ENCODE measurements at regions of chr2 and their contacts with region 1.

Region 1: DNA sequence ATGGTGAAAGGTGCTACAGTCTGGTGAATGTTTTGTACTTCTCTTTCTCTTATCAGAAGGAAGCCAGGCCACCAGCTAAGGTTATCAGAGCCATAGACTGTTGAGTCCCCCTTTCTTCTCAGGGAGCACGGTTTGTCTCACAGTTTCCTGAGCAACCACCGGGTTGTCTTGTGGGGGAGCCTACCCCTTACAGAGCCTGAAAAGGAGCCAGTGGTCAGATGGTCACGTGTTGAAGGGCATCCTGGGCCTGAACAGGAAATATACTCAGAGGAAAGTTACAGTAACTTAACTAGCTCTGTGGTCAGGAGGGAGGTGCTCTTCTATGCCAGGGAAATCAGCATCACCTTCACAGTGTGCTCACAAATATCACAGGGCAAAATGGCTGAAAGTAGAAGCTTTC is 11.6 kb downstream of the CD28 start:
- DNase-seq: peak; percentile 69
- ATAC-seq: peak; percentile 84
- H3K4me3 Mint-ChIP-seq: peak overlapping the region; percentile 56
- H3K27ac Mint-ChIP-seq: peak overlapping the region; percentile 83
- H3K4me1 Mint-ChIP-seq: peaks cover 82% of the 10 kb centered on the region
- H3K27me3 Mint-ChIP-seq: no peaks in the 10 kb centered on the region

Region 2: DNA sequence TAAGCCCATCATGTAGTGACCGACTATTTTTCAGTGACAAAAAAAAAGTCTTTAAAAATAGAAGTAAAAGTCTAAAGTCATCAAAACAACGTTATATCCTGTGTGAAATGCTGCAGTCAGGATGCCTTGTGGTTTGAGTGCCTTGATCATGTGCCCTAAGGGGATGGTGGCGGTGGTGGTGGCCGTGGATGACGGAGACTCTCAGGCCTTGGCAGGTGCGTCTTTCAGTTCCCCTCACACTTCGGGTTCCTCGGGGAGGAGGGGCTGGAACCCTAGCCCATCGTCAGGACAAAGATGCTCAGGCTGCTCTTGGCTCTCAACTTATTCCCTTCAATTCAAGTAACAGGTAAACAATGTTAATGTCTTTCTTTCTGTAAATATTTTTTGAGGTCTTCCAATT is 11.7 kb before region 1 on chr2 and contains the start of gene CD28:
- POLR2A ChIA-PET with region 1: interaction called, 75 read pairs
- DNase-seq: peak; percentile 82
- ATAC-seq: peak; percentile 84
- H3K4me3 Mint-ChIP-seq: peak within 1 kb of the TSS; percentile 89
- H3K27ac Mint-ChIP-seq: peak within 1 kb of the TSS; percentile 98
- H3K4me1 Mint-ChIP-seq: peaks cover 57% of the 10 kb centered on the region
- H3K27me3 Mint-ChIP-seq: no peaks in the 10 kb centered on the region
- total RNA-seq, gene CD28: 52.7 to 58.9 TPM

Region 3: GRCh38 chr2:203730076-203730729 is 12.1 kb after region 1 on chr2:
- POLR2A ChIA-PET with region 1: interaction called, 10 read pairs
- DNase-seq: no peak
- ATAC-seq: peak; percentile 55
- H3K4me3 Mint-ChIP-seq: peak overlapping the region; percentile 31
- H3K27ac Mint-ChIP-seq: peak overlapping the region; percentile 59
- H3K4me1 Mint-ChIP-seq: peaks cover 56% of the 10 kb centered on the region
- H3K27me3 Mint-ChIP-seq: no peaks in the 10 kb centered on the region

Region 4: DNA sequence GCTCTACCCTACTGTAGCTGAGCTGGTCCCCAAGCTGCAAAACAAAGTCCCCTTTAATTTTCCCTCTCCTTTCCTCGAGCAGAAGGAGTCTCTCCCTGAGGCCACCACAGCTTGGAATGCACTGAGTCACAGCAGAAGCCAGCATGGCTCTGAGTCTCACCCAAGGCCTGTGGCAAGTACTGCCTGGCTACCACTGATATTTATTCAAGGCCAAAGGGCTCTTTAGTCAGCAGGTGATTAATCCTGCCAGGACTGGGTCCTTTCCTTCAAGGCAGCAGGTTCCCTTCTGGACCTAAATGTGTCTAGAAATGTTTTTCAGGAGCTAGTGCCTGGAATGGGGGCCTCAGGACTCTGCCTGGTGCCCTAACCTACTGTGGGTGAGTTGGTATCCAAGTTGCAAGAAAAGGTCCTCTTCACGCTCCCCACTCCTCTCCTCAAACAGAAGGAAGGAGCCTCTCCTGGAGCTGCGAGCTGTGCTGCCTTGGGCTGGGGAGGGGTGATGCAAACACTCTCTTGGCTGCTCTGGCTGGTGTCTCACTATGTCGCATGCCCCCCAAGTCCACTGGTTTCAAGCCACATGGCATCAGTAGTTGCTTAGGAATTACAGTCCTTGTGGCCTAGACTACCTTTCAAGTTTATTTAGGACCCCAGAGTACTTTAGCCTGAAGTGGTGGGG is 41.7 kb after region 1 on chr2:
- POLR2A ChIA-PET with region 1: no interaction called
- DNase-seq: no peak
- ATAC-seq: no peak
- H3K4me3 Mint-ChIP-seq: no peak overlapping the region
- H3K27ac Mint-ChIP-seq: no peak overlapping the region
- H3K4me1 Mint-ChIP-seq: peaks cover 17% of the 10 kb centered on the region
- H3K27me3 Mint-ChIP-seq: no peaks in the 10 kb centered on the region